Caco-2 (cell line): ENCODE measurements at regions of chr10 and their contacts with region 1.

Region 1: GRCh38 chr10:987870-988666 is at the start of gene GTPBP4:
- DNase-seq: peak; percentile 98
- H3K4me3 ChIP-seq: peak within 1 kb of the TSS; percentile 86
- H3K4me3 Mint-ChIP-seq: peak within 1 kb of the TSS; percentile 99
- H3K27ac Mint-ChIP-seq: peak within 1 kb of the TSS; percentile 99
- H3K4me1 ChIP-seq: peaks cover 52% of the 10 kb centered on the region
- H3K4me1 Mint-ChIP-seq: peaks cover 41% of the 10 kb centered on the region
- H3K27me3 ChIP-seq: no peaks in the 10 kb centered on the region
- H3K27me3 Mint-ChIP-seq: no peaks in the 10 kb centered on the region
- CTCF ChIP-seq: peak in 1 of 2 experiments; percentile 69
- total RNA-seq, gene GTPBP4: 175 and 202 TPM in 2 replicates

Region 2: DNA sequence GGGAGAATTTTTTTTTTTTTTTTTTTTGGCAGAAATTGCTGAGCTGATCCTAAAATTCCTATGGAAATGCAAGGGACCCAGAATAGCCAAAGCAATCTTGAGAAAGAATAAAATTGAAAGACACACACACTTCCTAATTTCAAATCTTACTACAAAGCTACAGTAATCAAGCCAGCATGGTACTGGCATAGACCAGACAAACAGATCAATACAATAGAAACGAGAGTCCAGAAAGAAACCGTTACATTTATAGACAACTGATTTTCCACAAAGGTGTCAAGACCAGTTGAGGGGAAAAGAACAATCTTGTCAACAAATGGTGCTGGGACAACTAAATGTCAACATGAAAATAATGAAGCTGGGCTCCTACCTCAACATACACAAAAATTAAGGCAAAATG is 91.1 kb before region 1 on chr10:
- CTCF ChIA-PET with region 1: no interaction called
- POLR2A ChIA-PET with region 1: interaction called, 12 read pairs
- intact Hi-C with region 1: no loop called
- DNase-seq: no peak
- H3K4me3 ChIP-seq: no peak overlapping the region
- H3K4me3 Mint-ChIP-seq: no peak overlapping the region
- H3K27ac Mint-ChIP-seq: no peak overlapping the region
- H3K4me1 ChIP-seq: peaks cover 6% of the 10 kb centered on the region; the same call in 1 of the 2 replicates
- H3K4me1 Mint-ChIP-seq: peaks cover 28% of the 10 kb centered on the region
- H3K27me3 ChIP-seq: no peaks in the 10 kb centered on the region
- H3K27me3 Mint-ChIP-seq: no peaks in the 10 kb centered on the region
- CTCF ChIP-seq: no peak

Region 3: GRCh38 chr10:931416-932318 is 56.4 kb before region 1 on chr10 and contains the start of gene LARP4B:
- CTCF ChIA-PET with region 1: interaction called, 5 read pairs
- POLR2A ChIA-PET with region 1: interaction called, 56 read pairs
- intact Hi-C with region 1: loop called (anchors 1 kb)
- DNase-seq: peak; percentile 98 to 100
- H3K4me3 ChIP-seq: peak within 1 kb of the TSS; percentile 94
- H3K4me3 Mint-ChIP-seq: peak within 1 kb of the TSS; percentile 93
- H3K27ac Mint-ChIP-seq: peak within 1 kb of the TSS; percentile 89
- H3K4me1 ChIP-seq: peaks cover 37% of the 10 kb centered on the region
- H3K4me1 Mint-ChIP-seq: peaks cover 29% of the 10 kb centered on the region
- H3K27me3 ChIP-seq: no peaks in the 10 kb centered on the region
- H3K27me3 Mint-ChIP-seq: no peaks in the 10 kb centered on the region
- CTCF ChIP-seq: no peak
- total RNA-seq, gene LARP4B: 230 and 235 TPM in 2 replicates

Region 4: GRCh38 chr10:970311-971149 is 17.5 kb before region 1 on chr10:
- CTCF ChIA-PET with region 1: interaction called, 14 read pairs
- POLR2A ChIA-PET with region 1: interaction called, 123 read pairs
- intact Hi-C with region 1: loop called (anchors 1 kb)
- DNase-seq: peak; percentile 91
- H3K4me3 ChIP-seq: peak overlapping the region; percentile 17
- H3K4me3 Mint-ChIP-seq: peak overlapping the region; percentile 69
- H3K27ac Mint-ChIP-seq: peak overlapping the region; percentile 89
- H3K4me1 ChIP-seq: peaks cover 69% of the 10 kb centered on the region
- H3K4me1 Mint-ChIP-seq: peaks cover 75% of the 10 kb centered on the region
- H3K27me3 ChIP-seq: no peaks in the 10 kb centered on the region
- H3K27me3 Mint-ChIP-seq: no peaks in the 10 kb centered on the region
- CTCF ChIP-seq: peak in 1 of 2 experiments; percentile 6

Region 5: DNA sequence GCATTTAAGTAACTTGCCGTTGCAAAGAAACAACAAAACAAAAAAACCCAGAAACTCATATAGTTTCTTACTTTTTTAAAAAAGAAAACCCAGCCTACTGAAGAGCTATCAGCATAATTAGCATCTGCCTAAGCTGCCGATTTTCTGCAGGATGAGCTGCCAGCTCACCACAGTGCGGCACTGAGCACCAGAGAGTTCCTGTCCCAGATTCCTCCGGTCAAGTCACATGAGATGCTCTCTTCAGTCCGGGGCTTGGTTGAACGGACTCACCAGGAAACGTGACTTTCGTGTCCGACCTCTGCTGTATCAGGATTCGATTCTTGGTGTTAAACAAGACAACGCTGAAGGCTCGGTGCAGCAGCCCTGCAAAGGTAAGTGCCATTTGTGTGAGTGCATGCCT is 34.3 kb after region 1 on chr10:
- CTCF ChIA-PET with region 1: no interaction called
- POLR2A ChIA-PET with region 1: no interaction called
- intact Hi-C with region 1: no loop called
- DNase-seq: no peak
- H3K4me3 ChIP-seq: no peak overlapping the region
- H3K4me3 Mint-ChIP-seq: no peak overlapping the region
- H3K27ac Mint-ChIP-seq: peak overlapping the region; percentile 32
- H3K4me1 ChIP-seq: no peaks in the 10 kb centered on the region
- H3K4me1 Mint-ChIP-seq: no peaks in the 10 kb centered on the region
- H3K27me3 ChIP-seq: no peaks in the 10 kb centered on the region
- H3K27me3 Mint-ChIP-seq: no peaks in the 10 kb centered on the region
- CTCF ChIP-seq: no peak